ENCODE measurements at regions of chr11 and their contacts with region 1.

Region 1: GRCh38 chr11:61598886-61599868 is 18.3 kb upstream of the SYT7 start:
- DNase-seq: peak; percentile 59
- ATAC-seq: peak; percentile 77
- H3K4me3 Mint-ChIP-seq: peak overlapping the region; percentile 38; the same call in 1 of the 2 replicates
- H3K27ac Mint-ChIP-seq: peak overlapping the region; percentile 60; the same call in 1 of the 2 replicates
- H3K4me1 Mint-ChIP-seq: peaks cover 44% of the 10 kb centered on the region
- H3K27me3 Mint-ChIP-seq: no peaks in the 10 kb centered on the region; the same call in 1 of the 2 replicates
- CTCF ChIP-seq: no peak

Region 2: DNA sequence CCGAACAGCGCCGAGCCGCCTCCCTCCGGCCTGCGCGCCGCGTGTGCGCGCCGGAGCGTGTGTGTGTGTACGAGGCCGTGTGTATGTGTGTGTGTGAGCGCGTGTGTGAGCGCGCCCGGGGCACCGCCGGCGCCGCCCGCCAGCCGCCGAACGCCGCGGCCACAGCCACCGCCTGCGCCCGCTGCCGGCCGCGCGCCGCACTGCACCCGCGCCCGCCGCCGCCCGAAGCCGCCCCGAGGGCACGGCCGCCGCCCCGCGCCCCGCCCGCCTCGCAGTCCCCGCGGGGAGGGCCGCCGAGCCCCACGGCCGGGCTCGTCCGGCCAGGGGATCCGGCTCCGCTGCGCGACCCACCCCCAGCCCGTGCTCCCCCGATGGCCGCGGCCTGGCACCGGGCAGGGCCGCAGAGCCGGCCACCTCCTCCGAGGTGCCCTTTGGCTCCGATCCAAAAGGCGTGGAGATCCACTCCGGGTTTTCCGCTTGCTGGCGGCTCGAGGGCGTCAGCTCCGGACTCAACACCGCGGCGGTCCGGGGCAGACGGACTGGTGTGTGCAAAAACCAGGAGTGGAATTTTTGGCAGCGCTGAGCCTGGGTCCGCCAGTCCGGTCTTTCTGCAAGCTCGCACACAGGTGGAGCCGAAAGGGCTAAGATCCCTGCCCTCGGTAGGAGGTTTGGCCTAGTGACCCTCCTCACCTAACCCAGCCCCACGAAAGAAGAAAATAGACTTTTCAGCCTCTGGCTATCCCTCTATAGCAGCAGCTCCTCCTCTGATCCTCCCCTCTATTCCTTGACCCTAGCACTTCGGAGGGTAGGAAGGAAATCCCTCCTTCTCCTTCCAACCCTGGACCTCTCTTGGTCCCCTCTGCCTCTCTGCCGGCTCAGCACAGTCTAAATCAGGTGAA is 17.9 kb before region 1 on chr11 and contains the start of gene SYT7:
- CTCF ChIA-PET with region 1: interaction called, 45 read pairs
- POLR2A ChIA-PET with region 1: no interaction called
- DNase-seq: peak; percentile 99
- ATAC-seq: peak; percentile 83
- H3K4me3 Mint-ChIP-seq: peak within 1 kb of the TSS; percentile 79
- H3K27ac Mint-ChIP-seq: no peak within 1 kb of the TSS
- H3K4me1 Mint-ChIP-seq: peaks cover 56% of the 10 kb centered on the region
- H3K27me3 Mint-ChIP-seq: peaks cover 61% of the 10 kb centered on the region
- CTCF ChIP-seq: no peak; the same call in 1 of the 2 replicates
- total RNA-seq, gene SYT7: 12.5 to 18.9 TPM (median 18.2 TPM) in 3 replicates

Region 3: GRCh38 chr11:61609980-61610366 is 10.8 kb after region 1 on chr11:
- CTCF ChIA-PET with region 1: interaction called, 11 read pairs
- POLR2A ChIA-PET with region 1: no interaction called
- DNase-seq: peak; percentile 67
- ATAC-seq: peak; percentile 93
- H3K4me3 Mint-ChIP-seq: no peak overlapping the region
- H3K27ac Mint-ChIP-seq: no peak overlapping the region
- H3K4me1 Mint-ChIP-seq: peaks cover 21% of the 10 kb centered on the region
- H3K27me3 Mint-ChIP-seq: peaks cover 2% of the 10 kb centered on the region; the same call in 1 of the 2 replicates
- CTCF ChIP-seq: no peak

Region 4: DNA sequence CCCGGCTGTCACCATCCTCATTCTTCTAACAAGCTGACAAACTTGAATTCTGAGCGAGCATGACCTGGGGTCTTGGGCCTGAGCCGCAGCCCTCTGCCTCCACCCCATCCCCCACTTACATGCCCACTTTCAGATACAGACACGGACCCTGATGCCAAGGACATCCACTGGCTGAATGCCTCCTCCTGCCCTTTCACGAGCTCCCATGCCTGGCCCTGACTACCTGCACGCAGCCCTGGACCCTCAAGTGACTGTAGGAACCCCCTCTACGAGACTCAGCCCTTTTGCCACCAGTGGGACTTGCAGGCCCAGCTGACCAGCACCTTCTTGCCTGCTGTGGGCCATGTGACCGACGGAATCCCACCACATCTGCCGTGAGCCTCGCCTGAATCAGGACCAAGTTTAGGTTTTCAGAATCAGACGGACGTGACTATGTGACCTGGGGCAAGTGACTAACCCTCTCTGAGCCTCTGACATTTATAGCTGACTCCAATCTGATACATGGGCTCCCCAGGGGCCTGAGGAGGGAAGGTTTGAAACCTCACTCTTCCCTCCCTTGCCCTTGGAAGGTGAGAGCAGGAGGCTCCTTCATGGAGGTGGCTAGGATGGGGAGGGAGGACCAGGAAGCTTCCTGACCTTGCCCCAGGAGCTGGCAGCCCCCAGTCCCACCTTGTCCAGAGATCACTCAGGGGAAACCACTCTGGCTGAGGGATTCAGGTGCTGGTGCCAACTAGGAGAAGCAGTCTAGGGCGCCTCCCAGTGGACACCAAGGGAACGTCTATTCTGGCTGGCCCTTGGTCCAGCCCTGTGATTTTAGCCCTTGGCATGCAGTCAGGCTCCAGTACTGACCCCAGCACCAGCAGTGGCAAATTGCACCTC is 28.6 kb after region 1 on chr11:
- CTCF ChIA-PET with region 1: interaction called, 22 read pairs
- POLR2A ChIA-PET with region 1: no interaction called
- DNase-seq: peak; percentile 87
- ATAC-seq: peak; percentile 79
- H3K4me3 Mint-ChIP-seq: no peak overlapping the region
- H3K27ac Mint-ChIP-seq: peak overlapping the region; percentile 70
- H3K4me1 Mint-ChIP-seq: peaks cover 50% of the 10 kb centered on the region
- H3K27me3 Mint-ChIP-seq: no peaks in the 10 kb centered on the region
- CTCF ChIP-seq: peak; percentile 92